ENCODE measurements at regions of chr4 and their contacts with region 1.

Region 1: DNA sequence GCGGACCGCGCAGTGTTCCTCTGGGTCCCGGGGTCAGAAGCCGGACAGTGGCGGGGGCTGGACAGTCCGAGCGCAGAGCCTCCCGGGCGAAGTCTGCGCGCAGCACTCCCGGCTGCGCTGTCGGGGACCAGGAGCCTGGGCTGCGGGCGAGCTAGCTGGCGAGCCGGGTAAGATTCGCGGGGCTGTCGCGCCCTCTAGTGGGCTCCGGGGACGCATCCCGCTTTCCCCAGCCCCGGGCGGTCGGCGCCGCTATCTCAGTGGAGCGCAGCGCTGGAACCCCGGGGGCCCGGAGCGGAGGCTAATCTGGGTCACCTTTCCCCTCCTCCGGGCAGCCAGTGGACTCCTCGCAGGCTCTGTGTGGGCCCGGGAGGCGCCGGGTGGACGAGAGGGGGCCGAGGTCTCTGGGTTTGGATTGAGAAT is 4.2 kb downstream of the PDGFRA start:
- DNase-seq: peak; percentile 70 to 97 (median 85)

Region 2: DNA sequence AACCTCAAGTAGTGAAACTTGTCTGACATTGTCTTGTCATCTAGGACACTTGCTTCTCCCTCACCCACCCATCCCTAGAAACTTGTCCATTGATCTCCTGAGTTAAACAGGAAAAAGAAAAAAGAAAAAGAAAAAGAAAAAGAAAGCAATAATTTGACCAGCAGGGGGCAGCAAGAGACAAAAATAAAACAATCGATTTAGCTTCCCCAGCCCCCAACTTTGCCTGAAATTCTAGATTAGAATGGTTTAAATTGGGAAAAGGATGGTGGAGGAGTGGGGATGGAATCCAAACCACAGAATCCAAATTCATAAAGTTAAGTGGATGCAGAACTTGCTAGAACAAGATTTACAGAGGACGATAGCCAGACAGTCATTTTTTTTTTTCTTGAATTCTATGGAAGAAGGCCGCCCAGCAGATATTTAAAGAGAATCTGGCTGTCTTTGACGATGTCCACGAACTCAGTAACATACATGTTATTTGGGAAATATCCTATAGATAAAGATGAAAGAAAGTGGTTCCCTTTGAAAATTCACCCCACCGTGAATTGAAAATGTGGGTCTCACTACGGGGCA is 1857.1 kb before region 1 on chr4:
- intact Hi-C with region 1: loop called (anchors 5 kb)
- DNase-seq: no peak

Region 3: GRCh38 chr4:53015681-53016080 is 1217.6 kb before region 1 on chr4:
- intact Hi-C with region 1: loop called (anchors 2 kb)
- DNase-seq: peak in 5 of 10 donors; percentile 12 to 21 (median 15)

Region 4: GRCh38 chr4:53196882-53197771 is 1036.2 kb before region 1 on chr4:
- intact Hi-C with region 1: loop called (anchors 5 kb)
- DNase-seq: no peak

Region 5: DNA sequence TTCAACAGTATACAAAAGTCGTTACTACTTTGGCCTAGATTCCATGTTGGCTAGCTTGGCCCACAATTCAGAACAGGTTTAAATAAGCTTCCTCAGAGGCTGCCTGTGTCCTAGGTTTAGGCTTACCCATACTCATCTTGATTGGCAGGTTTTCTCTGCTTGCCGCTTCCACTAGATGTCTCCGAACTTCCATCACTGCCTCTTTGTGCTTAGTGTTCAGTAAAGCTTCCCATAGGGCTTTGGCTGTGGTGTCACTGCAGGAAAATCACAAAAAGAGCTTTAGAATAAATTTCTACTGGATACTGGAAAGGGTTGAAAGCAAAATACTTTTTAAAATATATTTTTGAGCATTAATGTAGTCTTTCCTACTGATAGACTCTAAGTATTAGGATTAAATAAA is 919.8 kb before region 1 on chr4:
- intact Hi-C with region 1: loop called (anchors 5 kb)
- DNase-seq: peak in 2 of 10 donors; percentile 15 to 33

Region 6: GRCh38 chr4:53908661-53909078 is 324.6 kb before region 1 on chr4:
- intact Hi-C with region 1: loop called (anchors 2 kb)
- DNase-seq: peak in 2 of 10 donors; percentile 13 to 30

Region 7: DNA sequence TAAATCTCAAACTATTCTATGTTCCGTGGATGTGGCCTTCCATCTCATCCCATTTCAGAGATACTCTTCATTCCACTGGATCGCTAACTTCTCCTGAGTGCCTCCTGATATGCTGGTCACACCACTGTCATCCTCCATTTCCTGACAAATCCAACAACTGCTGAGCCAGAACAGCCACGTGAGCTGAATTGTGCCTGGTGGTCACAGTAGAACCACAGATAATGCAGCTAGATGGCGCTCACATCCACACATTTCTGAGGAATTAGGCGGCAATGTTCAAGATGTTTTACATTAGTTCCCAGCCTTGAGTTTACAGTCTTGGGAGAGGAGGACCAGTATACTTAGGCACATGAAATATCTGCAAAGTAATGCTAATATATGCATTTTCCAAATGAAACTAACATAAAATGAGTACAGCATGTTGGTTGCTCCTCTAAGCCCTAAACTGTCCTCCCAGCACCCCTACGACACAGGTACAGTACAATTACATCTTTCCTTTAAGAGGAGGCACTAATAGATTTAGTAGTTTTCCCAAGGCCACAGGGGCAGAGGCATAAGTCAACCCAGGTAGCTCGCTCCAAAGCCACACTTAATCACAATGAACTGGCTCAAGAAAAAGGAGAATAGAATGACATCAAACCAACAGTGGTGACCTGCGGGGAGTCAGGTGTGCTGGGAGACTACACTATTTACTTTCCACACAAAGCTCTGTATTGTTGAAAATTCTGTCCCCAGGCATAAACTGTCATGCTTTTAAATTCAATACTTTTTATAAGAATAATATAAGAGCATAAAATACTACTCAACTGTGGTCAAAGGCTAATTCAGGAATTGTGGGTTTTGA is 303.1 kb before region 1 on chr4:
- intact Hi-C with region 1: loop called (anchors 5 kb)
- DNase-seq: peak in 8 of 10 donors; percentile 17 to 89 (median 62)

Measured in posterior cingulate gyrus (tissue), 11 donors.